Ascending aorta (tissue), 2 donors: ENCODE measurements at regions of chr17 and their contacts with region 1.

Region 1: GRCh38 chr17:7614422-7615264 is at the start of gene FXR2:
- DNase-seq: peak; percentile 98 to 100
- H3K4me3 ChIP-seq: peak within 1 kb of the TSS; percentile 91 to 97
- H3K27ac ChIP-seq: peak within 1 kb of the TSS; percentile 85 to 89
- H3K4me1 ChIP-seq: peaks cover 0 to 26% of the 10 kb centered on the region in 2 donors
- H3K27me3 ChIP-seq: no peaks in the 10 kb centered on the region
- CTCF ChIP-seq: peak; percentile 61 to 67 (median 62)
- total RNA-seq, gene FXR2: 19.3 TPM

Region 2: DNA sequence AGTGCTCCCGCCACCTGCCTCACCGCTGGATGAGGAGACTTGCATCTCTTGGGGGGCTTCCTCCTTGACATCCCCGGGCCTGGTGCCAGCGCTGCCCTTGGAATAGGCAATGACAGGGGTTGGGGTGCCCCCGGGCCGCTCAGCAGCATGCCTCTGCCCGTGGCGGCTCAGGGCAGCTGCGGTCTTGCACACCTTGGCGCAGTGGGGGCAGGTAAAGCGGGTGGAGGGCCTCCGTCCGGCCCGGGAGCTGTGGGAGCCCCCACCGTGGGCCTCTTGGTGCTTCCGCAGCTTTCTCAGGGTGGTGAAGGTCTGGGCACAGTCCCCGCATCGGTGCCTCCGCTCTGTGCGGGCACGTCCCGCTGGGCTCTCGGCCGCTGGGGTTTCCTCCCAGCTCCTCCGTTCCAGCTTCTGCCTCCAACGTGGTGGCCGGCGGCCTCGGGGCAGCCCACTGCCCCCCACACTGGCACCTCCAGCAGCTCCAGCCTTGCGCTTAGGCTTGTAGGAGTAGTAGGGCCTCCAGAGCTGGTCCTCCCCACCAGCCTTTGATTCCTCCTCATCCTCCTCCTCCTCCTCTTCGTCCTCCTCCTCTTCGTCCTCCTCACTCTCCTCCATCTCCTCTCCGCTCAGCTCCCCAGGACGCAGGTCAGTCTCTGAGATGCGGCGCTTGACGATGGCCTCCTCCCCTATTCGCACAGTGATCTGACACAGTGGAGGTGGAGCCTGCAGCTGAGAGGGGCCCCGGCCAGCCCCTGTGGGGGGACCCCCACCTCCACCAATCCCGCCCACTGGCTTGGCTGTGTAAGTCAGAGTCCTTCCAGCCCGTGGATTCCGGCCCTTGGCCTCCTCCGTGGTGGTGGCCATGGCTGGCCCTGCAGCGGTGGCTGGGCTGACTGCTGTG is 151.9 kb before region 1 on chr17:
- intact Hi-C with region 1: no loop called
- DNase-seq: no peak
- H3K4me3 ChIP-seq: no peak overlapping the region
- H3K27ac ChIP-seq: no peak overlapping the region
- H3K4me1 ChIP-seq: peaks cover 0 to 12% of the 10 kb centered on the region in 2 donors
- H3K27me3 ChIP-seq: no peaks in the 10 kb centered on the region
- CTCF ChIP-seq: no peak

Region 3: GRCh38 chr17:7572588-7573323 is 41.9 kb before region 1 on chr17:
- intact Hi-C with region 1: loop called (anchors 2 kb)
- DNase-seq: peak; percentile 99 to 100
- H3K4me3 ChIP-seq: peak overlapping the region; percentile 78 to 94
- H3K27ac ChIP-seq: peak overlapping the region; percentile 93 to 99
- H3K4me1 ChIP-seq: peaks cover 0 to 15% of the 10 kb centered on the region in 2 donors
- H3K27me3 ChIP-seq: no peaks in the 10 kb centered on the region
- CTCF ChIP-seq: no peak

Region 4: DNA sequence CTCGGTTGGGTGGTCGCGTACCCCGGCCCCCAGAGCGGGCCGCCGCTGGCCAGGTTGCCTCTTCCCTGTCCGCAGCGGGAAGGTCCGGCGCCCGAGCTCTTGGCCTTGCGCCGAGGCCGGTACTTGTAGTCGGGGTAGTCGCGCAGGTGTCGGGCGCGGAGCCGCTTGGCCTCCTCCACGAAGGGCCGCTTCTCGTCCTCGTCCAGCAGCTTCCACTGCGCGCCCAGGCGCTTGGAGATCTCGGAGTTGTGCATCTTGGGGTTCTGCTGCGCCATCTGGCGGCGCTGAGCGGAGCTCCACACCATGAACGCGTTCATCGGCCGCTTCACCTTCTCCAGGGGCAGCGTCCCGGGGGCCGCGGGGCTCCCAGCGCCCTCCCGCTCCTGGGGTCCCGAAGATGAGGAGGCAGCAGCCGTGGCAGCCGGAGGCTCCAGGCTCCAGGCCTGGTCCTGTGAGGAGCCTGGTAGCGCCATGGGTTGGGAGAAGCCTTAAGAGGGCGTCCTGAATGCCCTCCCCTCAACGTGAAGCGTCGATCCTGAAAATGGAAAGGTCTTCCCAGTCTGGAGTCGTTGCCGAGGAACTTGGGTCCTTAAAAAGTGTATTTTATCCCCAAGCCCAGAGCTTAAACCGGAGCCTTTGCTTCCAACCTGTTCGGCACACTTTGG is 25.3 kb before region 1 on chr17:
- intact Hi-C with region 1: loop called (anchors 2 kb)
- DNase-seq: peak; percentile 45 to 92
- H3K4me3 ChIP-seq: peak overlapping the region; percentile 54 to 67
- H3K27ac ChIP-seq: peak overlapping the region; percentile 23 to 60
- H3K4me1 ChIP-seq: peaks cover 8 to 18% of the 10 kb centered on the region in 2 donors
- H3K27me3 ChIP-seq: no peaks in the 10 kb centered on the region
- CTCF ChIP-seq: peak; percentile 89 to 95 (median 93)

Region 5: GRCh38 chr17:7627250-7628121 is 12.8 kb after region 1 on chr17 and contains the start of gene SAT2:
- intact Hi-C with region 1: loop called (anchors 1 kb)
- DNase-seq: peak; percentile 80 to 96
- H3K4me3 ChIP-seq: peak within 1 kb of the TSS; percentile 70 to 76
- H3K27ac ChIP-seq: peak within 1 kb of the TSS; percentile 82 to 83
- H3K4me1 ChIP-seq: peaks cover 0 to 4% of the 10 kb centered on the region in 2 donors
- H3K27me3 ChIP-seq: no peaks in the 10 kb centered on the region
- CTCF ChIP-seq: no peak
- total RNA-seq, gene SAT2: 22.6 TPM

Region 6: DNA sequence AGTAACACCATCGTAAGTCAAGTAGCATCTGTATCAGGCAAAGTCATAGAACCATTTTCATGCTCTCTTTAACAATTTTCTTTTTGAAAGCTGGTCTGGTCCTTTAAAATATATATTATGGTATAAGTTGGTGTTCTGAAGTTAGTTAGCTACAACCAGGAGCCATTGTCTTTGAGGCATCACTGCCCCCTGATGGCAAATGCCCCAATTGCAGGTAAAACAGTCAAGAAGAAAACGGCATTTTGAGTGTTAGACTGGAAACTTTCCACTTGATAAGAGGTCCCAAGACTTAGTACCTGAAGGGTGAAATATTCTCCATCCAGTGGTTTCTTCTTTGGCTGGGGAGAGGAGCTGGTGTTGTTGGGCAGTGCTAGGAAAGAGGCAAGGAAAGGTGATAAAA is 58.6 kb after region 1 on chr17:
- intact Hi-C with region 1: no loop called
- DNase-seq: no peak
- H3K4me3 ChIP-seq: no peak overlapping the region
- H3K27ac ChIP-seq: no peak overlapping the region
- H3K4me1 ChIP-seq: no peaks in the 10 kb centered on the region
- H3K27me3 ChIP-seq: no peaks in the 10 kb centered on the region
- CTCF ChIP-seq: no peak

Region 7: GRCh38 chr17:7844292-7845154 is 229.9 kb after region 1 on chr17:
- intact Hi-C with region 1: loop called (anchors 10 kb)
- DNase-seq: peak; percentile 81 to 97
- H3K4me3 ChIP-seq: peak overlapping the region; percentile 80 to 88
- H3K27ac ChIP-seq: peak overlapping the region; percentile 97 to 99
- H3K4me1 ChIP-seq: peaks cover 6 to 18% of the 10 kb centered on the region in 2 donors
- H3K27me3 ChIP-seq: no peaks in the 10 kb centered on the region
- CTCF ChIP-seq: no peak